Breast epithelium (tissue), 4 donors: ENCODE measurements at regions of chr11 and their contacts with region 1.

Region 1: DNA sequence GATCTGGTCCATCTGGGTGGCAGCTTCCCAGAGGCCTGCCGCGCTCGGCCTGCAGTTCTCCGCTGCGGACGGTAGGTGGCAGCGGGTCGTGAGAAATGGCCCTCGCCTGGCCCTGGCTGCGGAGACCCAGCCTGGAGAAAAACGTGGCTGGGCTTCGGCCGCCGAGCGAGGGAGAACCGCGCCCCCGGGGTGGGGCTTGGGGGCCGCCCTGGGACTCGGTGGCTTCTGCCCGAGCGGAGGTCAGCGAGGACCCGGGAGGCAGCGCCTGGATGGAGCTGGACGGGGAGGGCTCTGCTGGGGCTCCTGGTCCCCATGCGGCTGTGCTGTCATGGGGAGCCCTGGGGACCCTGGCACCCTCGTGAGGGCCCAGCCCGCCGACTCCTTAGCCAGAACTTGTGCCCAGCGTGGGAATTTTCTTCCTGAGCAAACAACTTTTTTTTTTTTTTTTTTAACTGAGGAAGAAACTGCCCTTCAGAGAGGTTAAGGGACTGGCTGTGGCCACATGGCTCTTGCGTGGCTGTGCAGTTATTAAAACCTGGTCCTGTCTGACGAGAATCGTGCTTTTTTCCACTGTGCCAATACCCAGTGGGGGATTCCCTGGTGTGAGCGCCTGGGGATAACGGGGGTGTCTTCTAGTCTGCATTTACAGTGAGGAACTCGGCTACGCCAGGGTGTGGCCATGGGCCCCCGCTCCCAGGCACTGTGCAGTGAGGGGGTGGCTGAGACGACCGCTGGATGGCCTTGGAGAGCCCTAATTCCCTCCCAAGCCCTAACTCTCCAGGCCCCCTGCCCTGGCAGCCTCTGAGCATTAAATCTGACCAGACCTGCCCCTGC is 535.6 kb downstream of the INSC start:
- DNase-seq: peak; percentile 81 to 94
- H3K4me3 ChIP-seq: peak overlapping the region; percentile 21 to 63 (median 46)
- H3K27ac ChIP-seq: peak overlapping the region; percentile 39 to 70
- H3K4me1 ChIP-seq: no peaks in the 10 kb centered on the region
- H3K27me3 ChIP-seq: no peaks in the 10 kb centered on the region
- CTCF ChIP-seq: peak; percentile 96 to 98 (median 98)
- POLR2A ChIP-seq: no peak

Region 2: GRCh38 chr11:16605894-16606783 is 955.8 kb after region 1 on chr11:
- intact Hi-C with region 1: loop called (anchors 10 kb)
- DNase-seq: peak; percentile 79 to 90
- H3K4me3 ChIP-seq: peak overlapping the region; percentile 46 to 70 (median 54)
- H3K27ac ChIP-seq: peak overlapping the region in 1 of 2 donors; percentile 65
- H3K4me1 ChIP-seq: no peaks in the 10 kb centered on the region
- H3K27me3 ChIP-seq: peaks cover 3 to 83% of the 10 kb centered on the region in 2 donors
- CTCF ChIP-seq: peak; percentile 88 to 91 (median 90)
- POLR2A ChIP-seq: no peak